ENCODE measurements at regions of chr7 and their contacts with region 1.

Region 1: DNA sequence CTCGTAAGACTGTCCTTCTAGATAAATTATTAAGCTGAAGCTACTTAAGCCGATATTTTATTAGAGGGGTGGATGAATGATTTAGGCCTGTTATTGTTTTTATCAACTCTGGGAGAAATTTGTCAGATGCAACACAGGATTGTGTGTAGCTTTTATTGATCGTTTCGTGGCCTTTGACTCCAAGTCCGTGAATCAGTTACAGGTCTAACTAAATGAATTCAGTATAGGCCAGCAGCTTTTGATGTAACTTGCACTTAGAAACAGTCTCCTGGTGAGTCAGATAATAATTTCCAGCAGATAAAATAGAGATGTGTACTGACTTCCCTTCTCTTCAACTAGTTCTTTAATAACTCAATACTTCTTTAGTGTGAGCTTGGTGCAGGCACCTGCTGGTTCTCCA is 341.7 kb upstream of the SMIM30 start:
- DNase-seq: no peak
- ATAC-seq: no peak
- H3K4me3 ChIP-seq: no peak overlapping the region
- H3K27ac ChIP-seq: no peak overlapping the region
- H3K4me1 ChIP-seq: no peaks in the 10 kb centered on the region
- H3K27me3 ChIP-seq: no peaks in the 10 kb centered on the region
- CTCF ChIP-seq: no peak
- POLR2A ChIP-seq: no peak
- RAD21 ChIP-seq: no peak

Region 2: GRCh38 chr7:113677811-113678210 is 217.7 kb after region 1 on chr7:
- CTCF ChIA-PET with region 1: no interaction called
- POLR2A ChIA-PET with region 1: no interaction called
- dilution Hi-C with region 1: no loop called
- in situ Hi-C with region 1: no loop called
- intact Hi-C with region 1: loop called (anchors 10 kb)
- DNase-seq: no peak
- ATAC-seq: no peak
- H3K4me3 ChIP-seq: no peak overlapping the region
- H3K27ac ChIP-seq: no peak overlapping the region
- H3K4me1 ChIP-seq: no peaks in the 10 kb centered on the region
- H3K27me3 ChIP-seq: no peaks in the 10 kb centered on the region
- CTCF ChIP-seq: no peak
- POLR2A ChIP-seq: no peak
- RAD21 ChIP-seq: no peak